Endothelial cell of umbilical vein (primary cell): ENCODE measurements at regions of chr9 and their contacts with region 1.

Region 1: DNA sequence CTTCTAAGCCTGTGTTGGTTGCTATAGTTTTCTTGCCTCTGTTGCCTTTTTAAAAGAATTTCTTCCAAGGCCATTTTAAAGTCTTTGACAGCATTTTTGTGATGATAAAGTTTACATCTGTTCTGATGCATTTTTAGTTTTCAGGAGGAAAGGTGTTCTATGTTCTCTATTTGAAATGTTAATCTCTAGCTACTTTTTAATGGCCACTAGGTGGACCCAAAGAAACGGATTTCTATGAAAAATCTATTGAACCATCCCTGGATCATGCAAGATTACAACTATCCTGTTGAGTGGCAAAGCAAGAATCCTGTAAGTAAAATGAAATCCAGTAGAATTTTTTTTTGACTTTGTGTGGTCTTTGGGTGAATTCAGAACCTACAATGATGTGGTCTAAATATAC is 60.2 kb downstream of the MELK start:
- DNase-seq: peak; percentile 51
- H3K4me3 ChIP-seq: no peak overlapping the region
- H3K27ac ChIP-seq: no peak overlapping the region
- H3K4me1 ChIP-seq: no peaks in the 10 kb centered on the region
- H3K27me3 ChIP-seq: no peaks in the 10 kb centered on the region
- CTCF ChIP-seq: peak; percentile 39 to 43
- POLR2A ChIP-seq: no peak

Region 2: DNA sequence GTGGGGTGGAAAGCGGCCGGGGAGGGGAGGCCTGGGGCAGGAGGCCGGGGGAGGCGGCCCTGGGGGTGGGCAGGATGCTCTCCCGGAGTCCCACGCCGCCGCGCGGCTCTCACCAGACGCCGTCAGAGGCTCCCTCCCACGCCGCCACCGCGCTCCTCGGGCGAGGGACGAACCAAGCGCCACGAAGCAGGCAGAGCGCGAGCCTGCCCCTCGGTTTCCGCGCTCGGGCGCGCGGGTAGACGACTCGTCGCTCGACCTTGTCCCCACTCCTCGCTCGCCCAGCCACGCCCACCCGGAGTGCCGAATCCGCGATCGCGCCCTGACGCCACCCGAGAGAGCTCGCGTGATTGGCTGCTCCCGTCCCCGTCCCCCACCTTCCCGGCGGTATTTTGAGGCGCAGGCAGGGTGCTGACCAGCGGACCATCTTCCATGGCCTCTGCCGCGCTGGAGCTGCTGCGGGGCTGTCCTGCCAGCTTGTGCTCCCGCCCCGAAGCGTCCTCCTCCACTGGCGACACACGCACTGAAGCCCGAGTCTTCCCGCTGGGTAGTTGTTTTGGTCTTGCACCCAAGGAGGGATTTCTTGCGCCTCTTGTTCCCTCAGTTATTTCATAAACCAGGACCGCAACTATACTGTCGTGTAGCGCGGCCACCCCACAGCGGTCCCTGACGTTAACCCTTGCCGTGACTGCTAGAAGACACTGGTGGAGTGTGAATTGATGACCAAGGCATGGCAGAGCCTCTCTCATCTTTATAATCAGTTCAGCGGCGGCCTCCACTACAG is 374.5 kb before region 1 on chr9 and contains the start of gene GNE:
- CTCF ChIA-PET with region 1: no interaction called
- POLR2A ChIA-PET with region 1: no interaction called
- dilution Hi-C with region 1: no loop called
- intact Hi-C with region 1: no loop called
- DNase-seq: peak; percentile 95
- H3K4me3 ChIP-seq: peak within 1 kb of the TSS; percentile 65 to 84 (median 66)
- H3K27ac ChIP-seq: peak within 1 kb of the TSS; percentile 44
- H3K4me1 ChIP-seq: peaks cover 4% of the 10 kb centered on the region
- H3K27me3 ChIP-seq: no peaks in the 10 kb centered on the region
- CTCF ChIP-seq: no peak
- POLR2A ChIP-seq: peak; percentile 83
- total RNA-seq, gene GNE: 11.4 and 12.3 TPM in 2 replicates

Region 3: GRCh38 chr9:36597412-36598178 is 35.3 kb before region 1 on chr9:
- CTCF ChIA-PET with region 1: interaction called, 17 read pairs
- POLR2A ChIA-PET with region 1: no interaction called
- dilution Hi-C with region 1: no loop called
- intact Hi-C with region 1: no loop called
- DNase-seq: peak; percentile 55
- H3K4me3 ChIP-seq: no peak overlapping the region
- H3K27ac ChIP-seq: no peak overlapping the region
- H3K4me1 ChIP-seq: no peaks in the 10 kb centered on the region
- H3K27me3 ChIP-seq: no peaks in the 10 kb centered on the region
- CTCF ChIP-seq: peak; percentile 38 to 60
- POLR2A ChIP-seq: no peak

Region 4: GRCh38 chr9:36665921-36666431 is 33.1 kb after region 1 on chr9:
- CTCF ChIA-PET with region 1: interaction called, 11 read pairs
- POLR2A ChIA-PET with region 1: no interaction called
- dilution Hi-C with region 1: no loop called
- intact Hi-C with region 1: no loop called
- DNase-seq: peak; percentile 92
- H3K4me3 ChIP-seq: peak overlapping the region in 1 of 3 experiments; percentile 25
- H3K27ac ChIP-seq: peak overlapping the region; percentile 93
- H3K4me1 ChIP-seq: peaks cover 35% of the 10 kb centered on the region
- H3K27me3 ChIP-seq: no peaks in the 10 kb centered on the region
- CTCF ChIP-seq: no peak
- POLR2A ChIP-seq: peak; percentile 72

Region 5: DNA sequence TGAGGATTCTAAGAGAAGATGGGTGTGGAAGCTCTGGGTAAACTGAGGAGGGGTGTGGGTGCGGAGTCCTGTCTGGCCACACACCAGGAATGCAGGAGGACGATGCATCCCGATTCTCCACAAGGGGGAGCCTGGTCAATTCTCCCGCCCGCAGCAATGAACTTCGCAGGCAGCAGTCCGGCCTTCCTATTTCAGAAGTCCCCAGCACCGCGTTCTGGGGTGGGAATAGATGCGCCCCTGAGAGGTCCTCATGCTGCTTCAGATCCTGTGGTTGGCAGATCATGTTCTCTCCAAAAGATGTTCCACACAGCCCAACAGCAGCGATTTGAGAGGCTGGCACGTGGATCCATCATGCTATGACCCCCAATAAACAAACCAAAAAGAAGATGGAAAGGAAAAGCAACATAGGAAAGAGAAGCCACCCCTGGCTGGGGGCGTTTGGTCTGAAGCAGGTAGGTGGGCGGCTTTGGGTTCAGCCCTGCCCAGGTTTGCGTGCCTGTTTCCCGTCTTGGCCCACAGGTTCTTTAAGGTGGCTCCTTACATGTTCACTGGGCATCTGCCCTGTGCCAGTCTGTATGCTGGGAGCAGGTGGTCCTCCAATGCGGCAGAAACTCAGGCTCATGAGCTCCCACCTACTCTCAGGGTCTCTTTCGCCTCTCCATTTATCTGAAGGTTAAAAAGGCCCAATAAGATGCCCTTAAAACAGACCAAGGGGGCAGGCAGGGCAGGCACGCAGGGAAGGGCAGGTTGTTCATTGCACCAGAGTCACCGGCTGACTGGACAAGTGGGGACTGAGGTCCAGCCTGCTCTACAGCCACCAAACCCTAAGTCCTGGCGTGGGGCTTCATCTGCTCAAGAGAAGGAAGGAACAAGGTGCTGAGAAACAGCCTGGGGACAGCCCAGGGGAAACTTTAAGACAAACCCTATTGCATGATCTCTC is 229.6 kb after region 1 on chr9:
- CTCF ChIA-PET with region 1: interaction called, 5 read pairs
- POLR2A ChIA-PET with region 1: no interaction called
- dilution Hi-C with region 1: no loop called
- intact Hi-C with region 1: loop called (anchors 10 kb)
- DNase-seq: peak; percentile 40
- H3K4me3 ChIP-seq: no peak overlapping the region
- H3K27ac ChIP-seq: no peak overlapping the region
- H3K4me1 ChIP-seq: no peaks in the 10 kb centered on the region
- H3K27me3 ChIP-seq: peaks cover 26 to 35% of the 10 kb centered on the region in 2 experiments
- CTCF ChIP-seq: peak; percentile 65 to 84
- POLR2A ChIP-seq: no peak

Region 6: GRCh38 chr9:36956908-36957307 is 324.0 kb after region 1 on chr9:
- CTCF ChIA-PET with region 1: no interaction called
- POLR2A ChIA-PET with region 1: no interaction called
- dilution Hi-C with region 1: no loop called
- intact Hi-C with region 1: no loop called
- DNase-seq: no peak
- H3K4me3 ChIP-seq: no peak overlapping the region
- H3K27ac ChIP-seq: no peak overlapping the region
- H3K4me1 ChIP-seq: no peaks in the 10 kb centered on the region
- H3K27me3 ChIP-seq: peaks cover 25 to 27% of the 10 kb centered on the region in 2 experiments
- CTCF ChIP-seq: no peak
- POLR2A ChIP-seq: no peak